ENCODE measurements at regions of chr7 and their contacts with region 1.

Region 1: DNA sequence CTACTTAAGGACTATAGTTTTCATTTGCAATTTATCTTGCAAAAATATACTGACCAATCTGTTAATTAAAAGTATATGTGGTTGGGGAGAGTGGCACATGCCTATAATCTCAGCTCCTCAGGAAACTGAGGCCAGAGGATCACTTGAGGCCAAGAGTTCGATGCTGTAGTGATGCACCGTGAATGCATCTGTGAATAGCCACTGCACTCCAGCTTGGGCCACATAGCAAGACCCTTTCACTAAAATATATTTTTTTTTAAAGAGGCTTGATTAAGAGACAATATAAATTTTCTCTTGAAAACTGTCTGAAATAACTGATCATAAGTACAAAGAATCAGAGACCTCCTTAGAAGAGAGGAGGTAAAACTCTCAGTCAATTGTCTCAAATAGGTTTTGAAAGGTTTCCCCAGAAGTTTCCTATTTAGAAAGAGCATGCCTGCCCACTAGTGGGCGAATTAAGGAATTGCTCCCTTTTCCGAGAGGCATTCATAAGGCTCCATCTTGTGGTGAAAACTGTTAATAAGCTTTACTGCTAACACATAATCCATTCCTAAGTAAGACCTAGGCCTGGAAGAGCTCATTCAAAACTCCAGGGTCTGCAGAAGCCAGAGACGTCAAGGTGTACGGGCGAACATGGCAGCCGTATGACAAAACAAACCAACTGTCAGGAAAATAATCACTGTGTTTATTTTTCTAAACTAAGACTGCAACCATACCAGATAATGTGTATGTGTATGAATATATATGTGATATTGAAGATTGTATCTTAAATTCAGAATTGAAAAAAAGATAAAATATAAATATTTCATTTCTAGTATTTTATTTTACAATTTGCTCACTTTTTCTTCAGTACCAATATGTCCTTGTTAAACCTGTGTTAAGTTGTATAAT is 6.8 kb upstream of the TAS2R40 start:
- DNase-seq: peak; percentile 18 to 89 (median 46)
- ATAC-seq: peak; percentile 98
- H3K4me3 ChIP-seq: no peak overlapping the region
- H3K4me3 Mint-ChIP-seq: no peak overlapping the region
- H3K27ac ChIP-seq: no peak overlapping the region
- H3K27ac Mint-ChIP-seq: no peak overlapping the region
- H3K4me1 ChIP-seq: no peaks in the 10 kb centered on the region
- H3K4me1 Mint-ChIP-seq: no peaks in the 10 kb centered on the region
- H3K27me3 ChIP-seq: no peaks in the 10 kb centered on the region
- H3K27me3 Mint-ChIP-seq: peaks cover 4% of the 10 kb centered on the region
- CTCF ChIP-seq: peak; percentile 100

Region 2: GRCh38 chr7:141975806-141976523 is 1239.1 kb before region 1 on chr7:
- CTCF ChIA-PET with region 1: no interaction called
- POLR2A ChIA-PET with region 1: no interaction called
- intact Hi-C with region 1: loop called in 1 of 2 experiments (anchors 2 kb)
- DNase-seq: peak; percentile 26 to 76 (median 54)
- ATAC-seq: peak; percentile 78
- H3K4me3 ChIP-seq: peak overlapping the region; percentile 52
- H3K4me3 Mint-ChIP-seq: peak overlapping the region; percentile 68
- H3K27ac ChIP-seq: no peak overlapping the region
- H3K27ac Mint-ChIP-seq: peak overlapping the region; percentile 20
- H3K4me1 ChIP-seq: peaks cover 11% of the 10 kb centered on the region
- H3K4me1 Mint-ChIP-seq: peaks cover 21% of the 10 kb centered on the region
- H3K27me3 ChIP-seq: no peaks in the 10 kb centered on the region
- H3K27me3 Mint-ChIP-seq: no peaks in the 10 kb centered on the region
- CTCF ChIP-seq: peak; percentile 78

Region 3: DNA sequence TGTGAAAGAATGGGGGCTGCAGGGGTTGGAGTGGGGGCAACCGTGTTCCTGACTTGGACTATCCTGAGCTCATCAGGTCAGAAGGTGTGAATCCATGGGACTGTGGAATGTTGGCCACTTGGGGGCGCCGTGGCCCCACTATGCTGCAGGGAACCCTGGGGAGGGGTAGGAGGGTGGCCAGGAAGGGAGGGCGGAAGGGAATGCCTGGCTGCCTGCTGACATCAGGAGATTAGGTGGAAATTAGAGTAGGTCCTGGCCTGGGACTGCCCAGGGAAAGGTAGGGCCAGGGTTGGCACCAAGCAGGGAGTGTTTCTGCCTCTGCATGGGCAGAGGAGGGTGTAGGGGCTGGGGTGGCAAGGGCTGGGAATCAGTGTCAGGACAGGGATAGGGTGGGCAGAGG is 891.3 kb before region 1 on chr7:
- CTCF ChIA-PET with region 1: interaction called, 5 read pairs
- POLR2A ChIA-PET with region 1: no interaction called
- intact Hi-C with region 1: loop called in 1 of 2 experiments (anchors 5 kb)
- DNase-seq: peak in 8 of 14 experiments; percentile 34 to 72 (median 54)
- ATAC-seq: peak; percentile 38
- H3K4me3 ChIP-seq: no peak overlapping the region
- H3K4me3 Mint-ChIP-seq: no peak overlapping the region
- H3K27ac ChIP-seq: peak overlapping the region in 1 of 2 donors; percentile 17
- H3K27ac Mint-ChIP-seq: peak overlapping the region; percentile 83
- H3K4me1 ChIP-seq: peaks cover 24% of the 10 kb centered on the region
- H3K4me1 Mint-ChIP-seq: peaks cover 38% of the 10 kb centered on the region
- H3K27me3 ChIP-seq: no peaks in the 10 kb centered on the region
- H3K27me3 Mint-ChIP-seq: peaks cover 16% of the 10 kb centered on the region
- CTCF ChIP-seq: peak; percentile 45

Region 4: GRCh38 chr7:142496545-142497041 is 718.4 kb before region 1 on chr7:
- CTCF ChIA-PET with region 1: no interaction called
- POLR2A ChIA-PET with region 1: no interaction called
- intact Hi-C with region 1: loop called in 1 of 2 experiments (anchors 5 kb)
- DNase-seq: peak in 4 of 14 experiments; percentile 36 to 72 (median 60)
- ATAC-seq: peak; percentile 45
- H3K4me3 ChIP-seq: peak overlapping the region; percentile 3
- H3K4me3 Mint-ChIP-seq: peak overlapping the region; percentile 61
- H3K27ac ChIP-seq: peak overlapping the region in 1 of 2 donors; percentile 35
- H3K27ac Mint-ChIP-seq: peak overlapping the region; percentile 68
- H3K4me1 ChIP-seq: peaks cover 28% of the 10 kb centered on the region
- H3K4me1 Mint-ChIP-seq: peaks cover 60% of the 10 kb centered on the region
- H3K27me3 ChIP-seq: no peaks in the 10 kb centered on the region
- H3K27me3 Mint-ChIP-seq: no peaks in the 10 kb centered on the region
- CTCF ChIP-seq: peak; percentile 72

Region 5: GRCh38 chr7:142603870-142604448 is 611.1 kb before region 1 on chr7:
- CTCF ChIA-PET with region 1: interaction called, 13 read pairs
- POLR2A ChIA-PET with region 1: interaction called, 3 read pairs
- intact Hi-C with region 1: loop called (anchors 2 kb)
- DNase-seq: peak in 12 of 14 experiments; percentile 24 to 78 (median 42)
- ATAC-seq: peak; percentile 71
- H3K4me3 ChIP-seq: no peak overlapping the region
- H3K4me3 Mint-ChIP-seq: peak overlapping the region; percentile 58
- H3K27ac ChIP-seq: no peak overlapping the region
- H3K27ac Mint-ChIP-seq: peak overlapping the region; percentile 83
- H3K4me1 ChIP-seq: no peaks in the 10 kb centered on the region
- H3K4me1 Mint-ChIP-seq: peaks cover 7% of the 10 kb centered on the region
- H3K27me3 ChIP-seq: no peaks in the 10 kb centered on the region
- H3K27me3 Mint-ChIP-seq: no peaks in the 10 kb centered on the region
- CTCF ChIP-seq: peak; percentile 76

Region 6: DNA sequence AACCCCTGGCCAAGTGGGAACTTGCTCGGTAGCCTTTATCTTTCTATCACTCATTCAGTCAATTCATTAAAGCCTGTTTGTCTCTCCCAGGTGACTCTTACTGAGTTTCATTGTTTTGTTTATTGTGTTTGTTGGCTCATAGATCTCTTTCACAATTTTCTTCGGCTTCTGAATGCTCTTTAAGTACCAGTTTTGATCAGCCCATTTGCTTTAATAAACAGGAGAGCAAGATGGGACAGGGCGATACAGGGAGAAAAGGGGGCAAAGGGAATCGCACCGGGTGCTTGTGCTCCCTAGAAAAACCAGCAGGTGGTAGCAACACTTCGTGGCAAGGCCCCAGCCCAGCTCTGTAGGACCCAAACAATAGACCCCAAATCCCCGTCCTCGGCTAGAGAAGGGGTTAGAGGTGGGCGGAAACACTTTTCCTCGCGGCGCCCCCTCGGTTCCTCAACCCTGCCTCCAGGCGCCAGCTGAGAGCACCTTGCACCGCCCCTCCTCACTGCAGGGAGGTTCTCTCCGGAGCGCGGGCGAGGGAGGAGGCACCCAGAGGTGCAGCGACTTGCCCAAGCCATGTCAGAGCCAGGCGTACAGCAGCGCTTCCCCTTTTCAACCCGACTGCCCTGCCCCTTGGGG is 361.2 kb before region 1 on chr7:
- CTCF ChIA-PET with region 1: interaction called, 4 read pairs
- POLR2A ChIA-PET with region 1: no interaction called
- intact Hi-C with region 1: loop called (anchors 1 to 10 kb)
- DNase-seq: peak; percentile 44 to 83 (median 60)
- ATAC-seq: peak; percentile 82
- H3K4me3 ChIP-seq: peak overlapping the region; percentile 87
- H3K4me3 Mint-ChIP-seq: peak overlapping the region; percentile 95
- H3K27ac ChIP-seq: peak overlapping the region; percentile 24 to 41
- H3K27ac Mint-ChIP-seq: peak overlapping the region; percentile 85
- H3K4me1 ChIP-seq: peaks cover 30% of the 10 kb centered on the region
- H3K4me1 Mint-ChIP-seq: peaks cover 52% of the 10 kb centered on the region
- H3K27me3 ChIP-seq: no peaks in the 10 kb centered on the region
- H3K27me3 Mint-ChIP-seq: no peaks in the 10 kb centered on the region
- CTCF ChIP-seq: peak; percentile 90

Region 7: DNA sequence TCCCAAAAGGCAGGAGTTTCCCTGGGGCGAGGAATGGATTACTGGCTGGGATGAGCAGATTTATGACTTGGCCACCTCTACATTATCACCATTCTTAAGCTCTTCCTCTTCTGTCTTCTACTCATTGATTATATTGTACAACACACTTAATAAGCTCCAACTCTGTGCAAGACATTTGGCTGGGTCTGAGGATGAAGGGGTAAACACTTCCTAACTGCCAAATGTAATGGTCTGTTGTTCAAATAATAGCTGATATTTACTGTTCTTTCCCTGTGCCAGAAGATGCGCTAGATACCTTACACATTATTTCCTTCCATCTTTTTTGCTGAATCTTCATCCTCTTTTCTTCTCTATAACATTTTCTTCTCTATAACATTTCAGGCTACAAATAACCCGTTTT is 151.3 kb before region 1 on chr7:
- CTCF ChIA-PET with region 1: no interaction called
- POLR2A ChIA-PET with region 1: no interaction called
- intact Hi-C with region 1: no loop called
- DNase-seq: no peak
- ATAC-seq: no peak
- H3K4me3 ChIP-seq: no peak overlapping the region
- H3K4me3 Mint-ChIP-seq: no peak overlapping the region
- H3K27ac ChIP-seq: no peak overlapping the region
- H3K27ac Mint-ChIP-seq: no peak overlapping the region
- H3K4me1 ChIP-seq: no peaks in the 10 kb centered on the region
- H3K4me1 Mint-ChIP-seq: no peaks in the 10 kb centered on the region
- H3K27me3 ChIP-seq: no peaks in the 10 kb centered on the region
- H3K27me3 Mint-ChIP-seq: peaks cover 6% of the 10 kb centered on the region
- CTCF ChIP-seq: no peak

Region 8: GRCh38 chr7:143240291-143241168 is 25.5 kb after region 1 on chr7:
- CTCF ChIA-PET with region 1: interaction called, 21 read pairs
- POLR2A ChIA-PET with region 1: no interaction called
- intact Hi-C with region 1: no loop called
- DNase-seq: peak; percentile 43 to 88 (median 66)
- ATAC-seq: peak; percentile 99
- H3K4me3 ChIP-seq: no peak overlapping the region
- H3K4me3 Mint-ChIP-seq: peak overlapping the region; percentile 7
- H3K27ac ChIP-seq: no peak overlapping the region
- H3K27ac Mint-ChIP-seq: no peak overlapping the region
- H3K4me1 ChIP-seq: peaks cover 12% of the 10 kb centered on the region
- H3K4me1 Mint-ChIP-seq: peaks cover 31% of the 10 kb centered on the region
- H3K27me3 ChIP-seq: peaks cover 0 to 6% of the 10 kb centered on the region in 2 experiments
- H3K27me3 Mint-ChIP-seq: peaks cover 10% of the 10 kb centered on the region
- CTCF ChIP-seq: peak; percentile 95

Measured in CD4-positive, alpha-beta T cell (primary cell).